Gastrocnemius medialis (tissue), 4 donors: ENCODE measurements at regions of chr12 and their contacts with region 1.

Region 1: GRCh38 chr12:5428332-5429221 is 3.3 kb upstream of the NTF3 start:
- DNase-seq: no peak
- ATAC-seq: no peak
- H3K4me3 ChIP-seq: no peak overlapping the region
- H3K27ac ChIP-seq: no peak overlapping the region
- H3K4me1 ChIP-seq: peaks cover 22 to 40% of the 10 kb centered on the region in 2 donors
- H3K27me3 ChIP-seq: peaks cover 2 to 34% (median 21%) of the 10 kb centered on the region in 3 donors
- CTCF ChIP-seq: peak in 4 of 5 experiments; percentile 19 to 47 (median 33)
- POLR2A ChIP-seq: no peak

Region 2: DNA sequence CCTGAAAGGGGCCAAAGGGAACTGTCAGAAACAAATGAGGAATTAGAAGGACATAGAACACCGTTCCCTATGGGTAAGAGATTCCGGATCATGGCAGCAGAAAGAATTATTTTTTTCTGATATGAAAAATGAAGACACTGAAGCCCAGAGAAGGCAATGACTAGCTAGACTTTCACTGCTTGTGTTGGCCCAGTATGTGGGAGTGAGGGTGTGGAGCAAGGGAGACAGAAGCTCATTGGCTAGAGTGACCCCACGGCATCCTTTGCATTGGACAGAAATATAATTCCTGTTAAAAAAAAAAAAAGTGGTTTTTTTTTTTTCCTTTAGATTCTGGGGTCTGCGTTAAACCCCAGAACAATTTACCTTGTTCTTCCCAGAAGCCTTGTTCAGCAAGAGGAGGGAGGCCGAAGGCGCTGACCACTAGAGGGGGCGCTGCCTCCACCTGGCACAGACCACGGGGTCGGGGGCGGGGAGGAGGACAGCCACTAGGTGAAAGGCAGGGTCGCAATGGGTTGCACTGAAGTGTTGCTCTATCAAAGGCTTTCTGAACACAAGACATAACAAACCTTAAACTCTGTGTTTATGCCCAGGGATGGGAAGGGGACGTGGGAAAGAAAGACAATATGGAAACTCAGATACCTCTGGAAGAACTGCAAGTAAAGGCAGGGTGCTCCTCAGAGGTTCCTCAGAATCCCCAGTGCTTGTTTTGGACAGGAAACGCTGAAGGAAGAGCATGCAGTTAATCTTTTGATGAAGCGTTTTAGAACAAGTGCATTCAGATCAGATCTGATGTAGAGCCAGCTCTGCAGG is 228.1 kb before region 1 on chr12:
- in situ Hi-C with region 1: loop called in 2 of 4 experiments (anchors 10 to 25 kb)
- intact Hi-C with region 1: no loop called
- DNase-seq: peak in 1 of 2 donors; percentile 26
- ATAC-seq: peak; percentile 56 to 75
- H3K4me3 ChIP-seq: no peak overlapping the region
- H3K27ac ChIP-seq: no peak overlapping the region
- H3K4me1 ChIP-seq: peaks cover 0 to 5% of the 10 kb centered on the region in 2 donors
- H3K27me3 ChIP-seq: no peaks in the 10 kb centered on the region
- CTCF ChIP-seq: peak; percentile 43 to 84 (median 64)
- POLR2A ChIP-seq: no peak

Region 3: GRCh38 chr12:5522432-5523335 is 94.1 kb after region 1 on chr12:
- in situ Hi-C with region 1: no loop called
- intact Hi-C with region 1: no loop called
- DNase-seq: no peak
- ATAC-seq: no peak
- H3K4me3 ChIP-seq: no peak overlapping the region
- H3K27ac ChIP-seq: no peak overlapping the region
- H3K4me1 ChIP-seq: no peaks in the 10 kb centered on the region
- H3K27me3 ChIP-seq: no peaks in the 10 kb centered on the region
- CTCF ChIP-seq: no peak
- POLR2A ChIP-seq: no peak